Cardiac septum (tissue), 1 donor: ENCODE measurements at regions of chr22 and their contacts with region 1.

Region 1: GRCh38 chr22:17121227-17122195 is at the start of gene TMEM121B:
- DNase-seq: peak; percentile 90
- total RNA-seq, gene TMEM121B: 1.0 TPM

Region 2: GRCh38 chr22:16854631-16855030 is 266.9 kb before region 1 on chr22:
- intact Hi-C with region 1: no loop called
- DNase-seq: no peak

Region 3: GRCh38 chr22:17084554-17085276 is 36.8 kb before region 1 on chr22 and contains the start of gene IL17RA:
- intact Hi-C with region 1: loop called (anchors 5 kb)
- DNase-seq: peak; percentile 98
- total RNA-seq, gene IL17RA: 6.0 TPM

Region 4: GRCh38 chr22:17131686-17132085 is 10.2 kb after region 1 on chr22:
- intact Hi-C with region 1: loop called (anchors 1 kb)
- DNase-seq: no peak

Region 5: GRCh38 chr22:17158568-17159503 is 37.3 kb after region 1 on chr22 and contains the start of gene HDHD5:
- intact Hi-C with region 1: loop called (anchors 2 kb)
- DNase-seq: peak; percentile 96
- total RNA-seq, gene HDHD5: 39.6 TPM